GM12878 (cell line): ENCODE measurements at regions of chr6 and their contacts with region 1.

Region 1: DNA sequence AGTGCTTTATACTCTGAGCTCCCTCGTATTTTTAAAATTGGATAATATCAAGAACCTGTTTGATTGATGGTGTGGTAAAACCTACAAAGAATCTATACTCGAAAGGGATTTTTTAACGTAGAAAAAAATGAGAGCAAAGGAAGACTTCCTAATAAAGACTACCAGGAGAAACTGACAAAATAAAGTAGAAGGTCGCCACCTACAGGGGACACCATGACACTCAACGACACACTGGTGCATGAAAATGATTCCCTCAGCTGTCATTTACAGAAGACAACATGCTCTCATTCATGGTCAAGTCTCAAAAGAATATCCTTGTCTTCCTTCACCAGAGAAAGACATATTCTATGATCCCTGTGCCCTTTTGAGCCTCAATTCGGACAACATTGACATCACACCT is 10.1 kb upstream of the NHSL1 start:
- DNase-seq: no peak
- ATAC-seq: peak; percentile 89
- H3K4me3 ChIP-seq: no peak overlapping the region
- H3K27ac ChIP-seq: no peak overlapping the region
- H3K4me1 ChIP-seq: no peaks in the 10 kb centered on the region
- H3K27me3 ChIP-seq: no peaks in the 10 kb centered on the region
- CTCF ChIP-seq: peak; percentile 45 to 83 (median 55); a peak in 4 of 6 replicates
- EP300 ChIP-seq: no peak
- POLR2A ChIP-seq: no peak
- RAD21 ChIP-seq: peak; percentile 69

Region 2: DNA sequence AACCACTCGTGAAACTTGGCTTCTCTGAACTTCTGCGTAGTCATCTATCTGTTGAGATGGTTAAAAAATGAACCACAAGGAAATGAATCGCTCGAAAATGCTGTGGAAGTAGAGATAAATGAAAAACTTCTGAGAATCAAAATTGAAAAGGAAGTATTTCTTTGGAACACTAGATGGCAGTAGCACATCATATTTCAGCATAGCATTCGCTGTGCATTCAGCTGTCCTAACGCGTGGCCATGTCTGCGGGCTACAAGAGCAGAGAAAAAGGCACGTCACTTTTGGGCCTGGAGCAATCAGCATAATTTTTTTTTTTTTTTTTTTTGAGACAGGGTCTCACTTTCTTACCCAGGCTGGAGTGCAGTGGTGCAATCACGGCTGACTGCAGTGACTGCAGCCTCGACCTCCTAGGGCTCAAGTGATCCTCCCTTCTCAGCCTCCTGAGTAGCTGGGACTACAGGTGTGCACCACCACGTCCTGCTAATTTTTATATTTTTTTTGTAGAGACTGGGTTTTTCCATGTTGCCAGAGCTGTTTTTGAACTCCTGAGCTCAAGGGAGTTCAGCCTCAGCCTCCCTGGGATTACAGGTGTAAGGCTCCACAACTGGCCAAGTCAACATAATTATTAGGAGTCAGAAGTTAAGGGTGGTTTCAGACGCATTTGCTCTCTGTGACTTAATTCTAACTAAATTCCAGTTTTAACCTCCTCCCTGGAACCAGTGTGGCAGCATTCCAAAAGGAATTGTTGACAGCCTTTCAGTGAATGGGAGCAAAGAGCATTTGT is 393.3 kb before region 1 on chr6:
- CTCF ChIA-PET with region 1: interaction called, 97 read pairs
- POLR2A ChIA-PET with region 1: no interaction called
- RAD21 ChIA-PET with region 1: interaction called, 33 read pairs
- SMC1A ChIA-PET with region 1: interaction called, 46 read pairs
- in situ Hi-C with region 1: no loop called
- intact Hi-C with region 1: loop called (anchors 2 kb)
- DNase-seq: peak; percentile 33
- ATAC-seq: peak; percentile 97
- H3K4me3 ChIP-seq: no peak overlapping the region
- H3K27ac ChIP-seq: no peak overlapping the region
- H3K4me1 ChIP-seq: no peaks in the 10 kb centered on the region
- H3K27me3 ChIP-seq: peaks cover 0 to 2% of the 10 kb centered on the region in 2 experiments; a peak in 1 of 4 replicates
- CTCF ChIP-seq: peak; percentile 53 to 86 (median 64); a peak in 5 of 6 replicates
- EP300 ChIP-seq: no peak
- POLR2A ChIP-seq: no peak
- RAD21 ChIP-seq: peak; percentile 82

Region 3: DNA sequence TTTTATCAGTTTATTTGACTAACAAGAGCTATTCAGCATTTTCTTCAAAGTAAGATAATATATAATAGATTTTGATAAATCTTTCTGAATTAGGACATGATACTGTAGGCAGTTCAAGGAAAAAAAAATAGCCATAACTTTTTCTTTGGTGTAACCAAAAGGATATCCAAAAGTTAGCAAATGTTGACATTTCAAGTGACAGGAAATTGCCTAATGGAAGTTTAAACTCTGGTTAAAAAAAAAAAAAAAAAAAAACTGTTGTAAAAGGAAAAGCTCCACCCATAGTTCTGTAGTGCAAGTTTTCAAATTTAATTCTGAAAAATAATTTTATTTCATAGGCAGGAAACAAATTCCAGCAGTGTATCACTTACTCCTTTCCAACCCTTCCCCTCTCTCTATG is 86.5 kb before region 1 on chr6:
- CTCF ChIA-PET with region 1: interaction called, 387 read pairs
- POLR2A ChIA-PET with region 1: interaction called, 3 read pairs
- RAD21 ChIA-PET with region 1: interaction called, 202 read pairs
- SMC1A ChIA-PET with region 1: interaction called, 234 read pairs
- in situ Hi-C with region 1: no loop called
- intact Hi-C with region 1: no loop called
- DNase-seq: no peak
- ATAC-seq: no peak
- H3K4me3 ChIP-seq: no peak overlapping the region
- H3K27ac ChIP-seq: no peak overlapping the region
- H3K4me1 ChIP-seq: no peaks in the 10 kb centered on the region
- H3K27me3 ChIP-seq: no peaks in the 10 kb centered on the region
- CTCF ChIP-seq: no peak
- EP300 ChIP-seq: no peak
- POLR2A ChIP-seq: no peak
- RAD21 ChIP-seq: no peak

Region 4: DNA sequence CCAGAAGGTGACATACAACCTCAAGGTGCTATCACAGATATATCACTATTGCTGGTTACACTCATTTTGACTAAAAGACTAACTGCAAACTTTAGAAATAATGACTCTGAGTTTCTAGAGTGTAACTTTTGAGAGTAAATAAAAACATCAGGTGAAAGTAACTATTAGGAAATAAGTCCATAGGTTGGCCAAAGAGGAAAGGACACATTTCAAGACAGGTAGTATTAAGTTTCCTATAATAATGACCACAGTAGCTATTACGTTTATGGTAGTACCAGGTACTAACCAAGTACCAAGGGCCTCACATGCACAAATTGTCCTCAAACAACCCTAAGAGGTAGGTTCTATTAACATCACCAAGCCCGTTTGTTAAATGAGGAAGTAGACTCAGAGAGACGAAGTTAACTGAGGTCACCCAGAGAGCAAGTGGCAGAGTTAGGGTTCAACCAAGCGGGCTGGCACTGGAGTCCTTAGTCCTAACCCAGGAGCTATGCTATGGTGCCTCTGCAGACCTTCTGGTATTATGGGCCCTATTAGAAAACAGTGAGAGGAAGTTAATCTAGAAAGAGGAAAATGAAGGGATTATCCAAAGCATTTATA is 68.5 kb before region 1 on chr6:
- CTCF ChIA-PET with region 1: interaction called, 387 read pairs
- POLR2A ChIA-PET with region 1: interaction called, 3 read pairs
- RAD21 ChIA-PET with region 1: interaction called, 42 read pairs
- SMC1A ChIA-PET with region 1: interaction called, 51 read pairs
- in situ Hi-C with region 1: no loop called
- intact Hi-C with region 1: no loop called
- DNase-seq: no peak
- ATAC-seq: peak; percentile 62
- H3K4me3 ChIP-seq: no peak overlapping the region
- H3K27ac ChIP-seq: no peak overlapping the region
- H3K4me1 ChIP-seq: no peaks in the 10 kb centered on the region
- H3K27me3 ChIP-seq: no peaks in the 10 kb centered on the region
- CTCF ChIP-seq: no peak
- EP300 ChIP-seq: no peak
- POLR2A ChIP-seq: no peak
- RAD21 ChIP-seq: no peak

Region 5: GRCh38 chr6:138477913-138478539 is 31.3 kb before region 1 on chr6:
- CTCF ChIA-PET with region 1: interaction called, 9 read pairs
- POLR2A ChIA-PET with region 1: interaction called, 5 read pairs
- RAD21 ChIA-PET with region 1: interaction called, 4 read pairs
- SMC1A ChIA-PET with region 1: interaction called, 21 read pairs
- in situ Hi-C with region 1: no loop called
- intact Hi-C with region 1: no loop called
- DNase-seq: no peak
- ATAC-seq: no peak
- H3K4me3 ChIP-seq: no peak overlapping the region
- H3K27ac ChIP-seq: no peak overlapping the region
- H3K4me1 ChIP-seq: no peaks in the 10 kb centered on the region
- H3K27me3 ChIP-seq: no peaks in the 10 kb centered on the region; a peak in 1 of 4 replicates
- CTCF ChIP-seq: no peak
- EP300 ChIP-seq: no peak
- POLR2A ChIP-seq: no peak
- RAD21 ChIP-seq: no peak

Region 6: GRCh38 chr6:138555421-138555988 is 46.1 kb after region 1 on chr6:
- CTCF ChIA-PET with region 1: interaction called, 15 read pairs
- POLR2A ChIA-PET with region 1: no interaction called
- RAD21 ChIA-PET with region 1: no interaction called
- SMC1A ChIA-PET with region 1: interaction called, 7 read pairs
- in situ Hi-C with region 1: no loop called
- intact Hi-C with region 1: no loop called
- DNase-seq: peak; percentile 8
- ATAC-seq: peak; percentile 75
- H3K4me3 ChIP-seq: no peak overlapping the region
- H3K27ac ChIP-seq: no peak overlapping the region
- H3K4me1 ChIP-seq: no peaks in the 10 kb centered on the region
- H3K27me3 ChIP-seq: no peaks in the 10 kb centered on the region
- CTCF ChIP-seq: no peak
- EP300 ChIP-seq: 0 out of 4 replicates have a peak, but pooled peaks of 1 of the 2 experiments have one; percentile 16
- POLR2A ChIP-seq: no peak
- RAD21 ChIP-seq: no peak

Region 7: GRCh38 chr6:138567052-138567451 is 57.7 kb after region 1 on chr6:
- CTCF ChIA-PET with region 1: no interaction called
- POLR2A ChIA-PET with region 1: no interaction called
- RAD21 ChIA-PET with region 1: no interaction called
- SMC1A ChIA-PET with region 1: no interaction called
- in situ Hi-C with region 1: no loop called
- intact Hi-C with region 1: no loop called
- DNase-seq: no peak
- ATAC-seq: no peak
- H3K4me3 ChIP-seq: no peak overlapping the region
- H3K27ac ChIP-seq: no peak overlapping the region
- H3K4me1 ChIP-seq: no peaks in the 10 kb centered on the region
- H3K27me3 ChIP-seq: peaks cover 0 to 2% of the 10 kb centered on the region in 2 experiments; a peak in 1 of 4 replicates
- CTCF ChIP-seq: no peak
- EP300 ChIP-seq: no peak
- POLR2A ChIP-seq: no peak
- RAD21 ChIP-seq: no peak